Caco-2 (cell line): ENCODE measurements at regions of chr16 and their contacts with region 1.

Region 1: DNA sequence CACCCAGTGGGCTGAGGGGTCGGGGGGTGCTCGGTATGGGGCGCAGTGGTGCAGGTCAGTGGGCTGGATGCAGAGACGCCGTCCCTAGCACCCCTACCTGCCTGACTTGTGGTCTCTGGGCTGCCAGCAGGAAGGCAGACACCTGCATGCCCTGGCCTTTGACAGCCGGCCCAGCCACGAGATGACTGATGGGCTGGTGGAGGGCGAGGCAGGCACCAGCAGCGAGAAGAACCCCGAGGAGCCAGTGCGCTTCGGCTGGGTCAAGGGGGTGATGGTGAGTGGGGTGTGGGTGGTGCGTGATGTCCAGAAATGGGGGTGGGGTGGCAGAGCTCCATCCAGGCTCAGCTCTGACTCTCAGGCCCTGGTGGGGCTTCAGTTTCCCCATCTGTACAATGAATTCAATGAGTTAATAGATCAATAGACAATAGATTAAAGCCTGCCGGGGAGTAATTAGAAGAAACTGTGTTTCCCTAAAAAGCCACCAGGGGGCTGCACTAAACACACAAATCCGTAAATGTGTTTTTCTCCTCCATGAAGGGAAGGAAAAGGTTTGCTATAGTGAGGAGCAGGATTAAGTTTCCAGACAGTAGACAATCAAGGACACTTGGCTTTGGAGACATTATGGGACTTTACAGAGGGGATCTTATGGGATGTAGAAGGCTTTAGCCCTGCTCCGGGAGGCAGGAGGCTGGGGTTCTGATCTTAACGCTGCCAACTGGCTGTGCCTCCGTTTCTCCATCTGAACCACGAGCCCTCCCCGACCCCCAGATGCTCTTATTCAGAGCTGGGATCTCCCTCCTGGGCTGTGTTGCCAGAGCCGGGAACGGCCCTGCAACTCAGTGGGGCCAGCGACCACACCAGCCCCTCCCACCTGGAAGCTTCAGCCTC is 2.2 kb downstream of the SLC12A3 start:
- DNase-seq: peak in 1 of 2 experiments; percentile 68
- H3K4me3 ChIP-seq: no peak overlapping the region
- H3K4me3 Mint-ChIP-seq: no peak overlapping the region
- H3K27ac Mint-ChIP-seq: peak overlapping the region; percentile 60
- H3K4me1 ChIP-seq: peaks cover 38% of the 10 kb centered on the region
- H3K4me1 Mint-ChIP-seq: peaks cover 35% of the 10 kb centered on the region
- H3K27me3 ChIP-seq: no peaks in the 10 kb centered on the region
- H3K27me3 Mint-ChIP-seq: no peaks in the 10 kb centered on the region
- CTCF ChIP-seq: peak; percentile 76 to 83

Region 2: DNA sequence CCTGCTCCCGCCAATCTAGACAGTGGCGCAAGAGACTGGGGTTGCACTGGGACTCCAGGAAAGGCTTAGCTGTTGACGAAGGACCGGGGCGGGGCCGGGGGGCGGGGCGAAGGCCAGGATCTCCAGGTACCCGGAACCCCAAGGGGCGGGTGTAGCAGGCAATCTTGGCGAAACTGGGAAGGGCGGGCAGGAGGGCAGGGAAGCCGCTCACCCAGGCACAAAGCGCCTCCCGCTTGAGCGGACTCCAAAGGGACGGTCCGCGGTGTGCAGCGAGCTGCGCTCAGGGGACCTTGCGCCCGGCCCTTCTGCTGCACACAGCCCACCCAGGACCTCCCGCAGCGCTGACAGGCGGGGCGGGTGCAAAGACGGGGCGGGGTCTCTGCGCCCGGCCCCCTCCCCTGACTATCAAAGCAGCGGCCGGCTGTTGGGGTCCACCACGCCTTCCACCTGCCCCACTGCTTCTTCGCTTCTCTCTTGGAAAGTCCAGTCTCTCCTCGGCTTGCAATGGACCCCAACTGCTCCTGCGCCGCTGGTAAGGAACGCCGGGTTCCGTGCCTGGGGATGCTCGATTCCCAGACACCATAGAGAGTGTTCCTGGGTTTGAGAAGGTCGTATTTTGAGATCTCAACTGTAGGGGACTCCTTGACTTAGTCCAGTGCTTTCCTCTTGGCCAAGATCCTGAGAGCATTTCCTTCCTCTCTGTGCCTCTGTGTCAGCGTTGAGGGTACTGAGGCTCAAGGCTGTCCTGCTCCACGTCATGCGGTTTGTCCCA is 209.4 kb before region 1 on chr16 and contains the start of gene MT1F:
- CTCF ChIA-PET with region 1: no interaction called
- POLR2A ChIA-PET with region 1: no interaction called
- intact Hi-C with region 1: no loop called
- DNase-seq: peak; percentile 88 to 97
- H3K4me3 ChIP-seq: peak within 1 kb of the TSS; percentile 69
- H3K4me3 Mint-ChIP-seq: peak within 1 kb of the TSS; percentile 81
- H3K27ac Mint-ChIP-seq: no peak within 1 kb of the TSS
- H3K4me1 ChIP-seq: peaks cover 11% of the 10 kb centered on the region
- H3K4me1 Mint-ChIP-seq: no peaks in the 10 kb centered on the region
- H3K27me3 ChIP-seq: no peaks in the 10 kb centered on the region; the same call in 1 of the 2 replicates
- H3K27me3 Mint-ChIP-seq: peaks cover 13% of the 10 kb centered on the region
- CTCF ChIP-seq: peak in 1 of 2 experiments; percentile 9
- total RNA-seq, gene MT1F: 2.8 and 12.5 TPM in 2 replicates

Region 3: GRCh38 chr16:56753410-56753809 is 113.8 kb before region 1 on chr16:
- CTCF ChIA-PET with region 1: no interaction called
- POLR2A ChIA-PET with region 1: no interaction called
- intact Hi-C with region 1: no loop called
- DNase-seq: no peak
- H3K4me3 ChIP-seq: no peak overlapping the region
- H3K4me3 Mint-ChIP-seq: no peak overlapping the region
- H3K27ac Mint-ChIP-seq: no peak overlapping the region
- H3K4me1 ChIP-seq: no peaks in the 10 kb centered on the region
- H3K4me1 Mint-ChIP-seq: no peaks in the 10 kb centered on the region
- H3K27me3 ChIP-seq: no peaks in the 10 kb centered on the region
- H3K27me3 Mint-ChIP-seq: no peaks in the 10 kb centered on the region
- CTCF ChIP-seq: no peak

Region 4: DNA sequence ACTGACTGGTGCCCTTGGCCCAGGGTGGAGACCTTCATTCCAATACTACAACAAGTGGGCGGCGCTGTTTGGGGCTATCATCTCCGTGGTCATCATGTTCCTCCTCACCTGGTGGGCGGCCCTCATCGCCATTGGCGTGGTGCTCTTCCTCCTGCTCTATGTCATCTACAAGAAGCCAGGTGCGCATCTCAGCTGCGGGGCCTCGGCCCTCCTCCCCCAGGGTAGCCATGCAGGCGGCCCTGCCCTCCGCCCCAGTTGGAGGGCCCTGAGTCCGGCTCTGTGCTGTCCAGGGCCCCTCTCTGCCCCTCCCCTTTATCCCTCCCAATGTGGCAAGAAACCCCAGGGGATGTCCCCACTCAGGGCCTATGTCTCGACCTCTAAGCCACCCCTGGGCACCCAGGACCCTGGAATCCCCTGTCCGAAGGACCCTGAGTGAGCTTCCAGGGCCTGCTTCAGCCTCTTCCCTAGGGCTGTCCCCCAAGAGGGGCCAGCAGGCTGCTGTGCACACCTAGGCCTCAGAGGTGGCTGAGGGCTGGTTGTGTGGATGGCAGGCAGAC is 16.9 kb after region 1 on chr16:
- CTCF ChIA-PET with region 1: no interaction called
- POLR2A ChIA-PET with region 1: no interaction called
- intact Hi-C with region 1: no loop called
- DNase-seq: no peak
- H3K4me3 ChIP-seq: no peak overlapping the region
- H3K4me3 Mint-ChIP-seq: no peak overlapping the region
- H3K27ac Mint-ChIP-seq: no peak overlapping the region
- H3K4me1 ChIP-seq: peaks cover 5% of the 10 kb centered on the region; the same call in 1 of the 2 replicates
- H3K4me1 Mint-ChIP-seq: no peaks in the 10 kb centered on the region
- H3K27me3 ChIP-seq: no peaks in the 10 kb centered on the region
- H3K27me3 Mint-ChIP-seq: no peaks in the 10 kb centered on the region
- CTCF ChIP-seq: no peak

Region 5: GRCh38 chr16:57045694-57046381 is 178.7 kb after region 1 on chr16:
- CTCF ChIA-PET with region 1: interaction called, 4 read pairs
- POLR2A ChIA-PET with region 1: no interaction called
- intact Hi-C with region 1: loop called (anchors 1 kb)
- DNase-seq: peak; percentile 58 to 64
- H3K4me3 ChIP-seq: no peak overlapping the region
- H3K4me3 Mint-ChIP-seq: no peak overlapping the region
- H3K27ac Mint-ChIP-seq: no peak overlapping the region
- H3K4me1 ChIP-seq: no peaks in the 10 kb centered on the region
- H3K4me1 Mint-ChIP-seq: no peaks in the 10 kb centered on the region
- H3K27me3 ChIP-seq: no peaks in the 10 kb centered on the region
- H3K27me3 Mint-ChIP-seq: peaks cover 4% of the 10 kb centered on the region
- CTCF ChIP-seq: peak; percentile 47 to 89